ENCODE measurements at regions of chr4 and their contacts with region 1.

Region 1: GRCh38 chr4:46270986-46271596 is 118.8 kb downstream of the GABRA2 start:
- DNase-seq: no peak
- H3K4me3 ChIP-seq: no peak overlapping the region
- H3K27ac ChIP-seq: no peak overlapping the region
- H3K4me1 ChIP-seq: no peaks in the 10 kb centered on the region
- H3K27me3 ChIP-seq: no peaks in the 10 kb centered on the region
- CTCF ChIP-seq: peak; percentile 57

Region 2: DNA sequence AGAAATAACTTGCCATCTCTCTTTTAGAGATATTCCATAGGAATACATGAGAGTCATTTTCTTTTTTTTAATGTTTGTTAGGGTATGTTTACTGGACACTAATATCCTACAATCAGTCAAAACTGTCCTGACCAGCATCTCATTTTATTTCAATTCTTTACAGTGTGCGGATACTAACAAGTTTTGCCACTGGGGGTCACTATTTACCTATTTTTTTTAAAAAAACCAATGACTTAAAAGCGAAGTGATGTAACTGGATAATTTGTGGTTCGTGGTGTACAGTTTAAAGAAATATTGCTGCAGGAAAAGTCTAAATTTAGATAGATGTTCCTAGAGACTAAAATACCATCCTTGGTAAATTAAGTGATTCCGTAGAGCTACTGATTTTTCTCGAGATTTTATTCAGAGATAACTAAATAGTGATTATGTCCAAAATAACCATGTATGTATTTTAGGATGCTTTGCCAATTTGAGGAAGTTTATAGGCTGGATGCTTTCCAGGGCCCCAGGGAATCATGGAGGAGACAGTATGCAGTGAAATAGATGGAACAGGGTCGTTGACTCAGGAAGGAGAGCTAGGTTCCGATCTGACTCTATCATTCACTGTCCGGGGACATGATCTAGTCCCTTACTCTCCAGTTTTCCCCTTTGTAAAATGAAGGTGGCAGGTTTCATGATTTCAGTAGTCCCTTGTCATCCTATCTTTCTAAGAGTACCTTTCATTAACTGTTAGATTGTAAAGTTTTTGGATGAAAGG is 1510.8 kb before region 1 on chr4:
- intact Hi-C with region 1: loop called (anchors 10 kb)
- DNase-seq: no peak
- H3K4me3 ChIP-seq: no peak overlapping the region
- H3K27ac ChIP-seq: no peak overlapping the region
- H3K4me1 ChIP-seq: peaks cover 4% of the 10 kb centered on the region
- H3K27me3 ChIP-seq: peaks cover 7% of the 10 kb centered on the region
- CTCF ChIP-seq: peak; percentile 69

Region 3: GRCh38 chr4:45453258-45453853 is 817.7 kb before region 1 on chr4:
- intact Hi-C with region 1: loop called (anchors 5 kb)
- DNase-seq: no peak
- H3K4me3 ChIP-seq: no peak overlapping the region
- H3K27ac ChIP-seq: no peak overlapping the region
- H3K4me1 ChIP-seq: no peaks in the 10 kb centered on the region
- H3K27me3 ChIP-seq: no peaks in the 10 kb centered on the region
- CTCF ChIP-seq: peak; percentile 64